MCF 10A (cell line): ENCODE measurements at regions of chr6 and their contacts with region 1.

Region 1: DNA sequence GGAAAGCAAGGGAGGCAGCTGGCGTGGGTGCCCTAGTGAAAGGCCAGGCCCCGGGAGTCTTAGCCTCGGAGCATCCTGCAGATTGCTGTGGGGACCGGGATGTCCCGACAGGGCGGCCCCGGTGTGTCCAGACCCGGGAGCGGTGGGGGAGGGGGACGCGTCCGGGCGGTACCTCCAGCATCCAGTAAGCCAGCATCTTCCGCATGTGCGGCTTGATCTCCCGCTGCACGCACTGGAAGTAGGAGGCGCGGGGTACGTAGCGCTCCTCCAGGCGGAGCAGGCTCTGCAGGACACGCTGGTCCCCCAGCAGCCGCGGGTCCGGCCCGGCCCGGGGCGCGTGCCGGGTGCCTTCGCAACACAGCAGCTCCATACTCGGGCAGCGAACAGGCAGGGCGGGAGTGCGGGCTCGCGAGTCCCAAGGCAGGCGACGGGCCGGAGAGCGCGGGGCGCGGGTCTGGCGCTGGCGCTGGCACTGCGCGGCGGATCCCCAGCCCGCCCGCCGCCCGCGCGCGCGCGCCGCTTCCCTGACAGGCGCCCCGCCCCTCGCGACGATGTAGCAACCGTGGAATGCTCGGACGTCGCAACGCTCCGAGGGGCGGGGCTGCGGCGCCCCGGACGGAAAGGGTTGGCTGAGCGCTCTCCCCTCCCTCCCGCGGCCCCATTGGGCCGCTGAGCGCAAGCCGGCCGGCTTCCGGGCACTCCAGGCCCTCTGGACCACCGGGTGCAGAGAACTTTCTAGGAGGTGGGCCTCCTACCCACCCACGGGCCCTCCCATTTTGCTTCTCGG is at the start of gene CCND3:
- DNase-seq: peak; percentile 88
- H3K4me3 Mint-ChIP-seq: peak within 1 kb of the TSS; percentile 85
- H3K27ac Mint-ChIP-seq: peak within 1 kb of the TSS; percentile 59
- H3K4me1 Mint-ChIP-seq: peaks cover 25% of the 10 kb centered on the region
- H3K27me3 Mint-ChIP-seq: no peaks in the 10 kb centered on the region
- CTCF ChIP-seq: no peak
- total RNA-seq, gene CCND3: 52.5 and 75.8 TPM in 2 replicates

Region 2: DNA sequence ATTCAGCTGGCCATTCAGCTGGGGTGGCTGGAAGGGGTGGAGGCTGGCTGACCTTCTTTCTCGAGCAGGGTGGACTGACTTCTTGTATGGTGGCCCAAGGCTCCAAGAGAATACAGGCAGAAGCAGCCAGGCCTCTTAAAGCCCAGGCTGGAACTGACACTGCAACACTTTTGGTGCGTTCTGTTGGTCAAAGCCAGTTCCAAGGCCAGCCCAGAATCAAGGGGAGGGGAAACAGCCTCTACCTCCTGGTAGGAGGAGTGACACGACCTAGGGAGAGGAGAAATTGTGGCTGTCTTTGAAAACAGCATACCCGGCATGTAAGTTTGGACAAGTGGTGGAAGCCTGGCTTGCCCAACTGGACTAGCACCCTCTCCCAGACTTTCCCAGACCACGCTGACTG is 323.4 kb before region 1 on chr6:
- CTCF ChIA-PET with region 1: no interaction called
- POLR2A ChIA-PET with region 1: no interaction called
- intact Hi-C with region 1: no loop called
- DNase-seq: no peak
- H3K4me3 Mint-ChIP-seq: no peak overlapping the region
- H3K27ac Mint-ChIP-seq: no peak overlapping the region
- H3K4me1 Mint-ChIP-seq: peaks cover 16% of the 10 kb centered on the region
- H3K27me3 Mint-ChIP-seq: no peaks in the 10 kb centered on the region
- CTCF ChIP-seq: no peak

Region 3: DNA sequence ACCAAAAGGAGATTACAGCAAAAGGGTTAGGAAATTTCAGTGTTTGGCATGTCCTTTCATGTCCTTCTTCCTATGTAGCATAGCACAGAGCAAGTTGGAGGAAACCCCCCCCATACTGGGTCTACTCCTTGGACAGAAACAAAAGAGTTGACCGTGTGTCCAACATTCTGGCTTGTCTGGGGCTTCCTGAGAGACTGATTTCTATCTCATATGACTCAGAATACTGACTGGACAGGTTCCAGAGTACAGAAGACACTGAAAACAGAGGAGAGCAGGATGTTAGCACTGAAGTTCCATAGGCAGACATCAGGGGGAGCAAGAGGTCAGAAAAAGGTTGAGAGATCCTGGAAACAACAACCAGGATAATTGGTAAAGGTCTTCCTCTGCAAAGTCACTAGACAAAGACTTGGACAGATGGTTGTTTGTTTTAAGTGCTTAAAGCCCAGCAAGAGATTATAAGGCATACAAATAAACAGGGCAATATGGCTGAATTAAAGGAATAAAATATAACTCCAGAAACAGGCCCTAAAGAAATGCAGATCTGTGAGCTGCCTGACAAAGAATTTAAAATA is 94.7 kb before region 1 on chr6:
- CTCF ChIA-PET with region 1: interaction called, 28 read pairs
- POLR2A ChIA-PET with region 1: interaction called, 11 read pairs
- intact Hi-C with region 1: loop called (anchors 1 kb)
- DNase-seq: peak; percentile 97
- H3K4me3 Mint-ChIP-seq: no peak overlapping the region
- H3K27ac Mint-ChIP-seq: peak overlapping the region; percentile 49
- H3K4me1 Mint-ChIP-seq: peaks cover 12% of the 10 kb centered on the region
- H3K27me3 Mint-ChIP-seq: no peaks in the 10 kb centered on the region
- CTCF ChIP-seq: peak; percentile 79

Region 4: GRCh38 chr6:41966961-41967311 is 25.5 kb after region 1 on chr6:
- CTCF ChIA-PET with region 1: interaction called, 8 read pairs
- POLR2A ChIA-PET with region 1: interaction called, 11 read pairs
- intact Hi-C with region 1: no loop called
- DNase-seq: peak; percentile 84
- H3K4me3 Mint-ChIP-seq: no peak overlapping the region
- H3K27ac Mint-ChIP-seq: peak overlapping the region; percentile 22
- H3K4me1 Mint-ChIP-seq: peaks cover 24% of the 10 kb centered on the region
- H3K27me3 Mint-ChIP-seq: no peaks in the 10 kb centered on the region
- CTCF ChIP-seq: no peak

Region 5: GRCh38 chr6:42050266-42051032 is 109.0 kb after region 1 on chr6 and contains the start of gene TAF8:
- CTCF ChIA-PET with region 1: interaction called, 117 read pairs
- POLR2A ChIA-PET with region 1: interaction called, 136 read pairs
- intact Hi-C with region 1: no loop called
- DNase-seq: peak; percentile 93
- H3K4me3 Mint-ChIP-seq: peak within 1 kb of the TSS; percentile 91
- H3K27ac Mint-ChIP-seq: peak within 1 kb of the TSS; percentile 94
- H3K4me1 Mint-ChIP-seq: peaks cover 22% of the 10 kb centered on the region
- H3K27me3 Mint-ChIP-seq: no peaks in the 10 kb centered on the region
- CTCF ChIP-seq: no peak
- total RNA-seq, gene TAF8: 23.8 and 25.8 TPM in 2 replicates

Region 6: GRCh38 chr6:42185597-42185996 is 244.1 kb after region 1 on chr6:
- CTCF ChIA-PET with region 1: no interaction called
- POLR2A ChIA-PET with region 1: no interaction called
- intact Hi-C with region 1: no loop called
- DNase-seq: no peak
- H3K4me3 Mint-ChIP-seq: no peak overlapping the region
- H3K27ac Mint-ChIP-seq: no peak overlapping the region
- H3K4me1 Mint-ChIP-seq: no peaks in the 10 kb centered on the region
- H3K27me3 Mint-ChIP-seq: no peaks in the 10 kb centered on the region
- CTCF ChIP-seq: no peak